ENCODE measurements at regions of chr3 and their contacts with region 1.

Region 1: DNA sequence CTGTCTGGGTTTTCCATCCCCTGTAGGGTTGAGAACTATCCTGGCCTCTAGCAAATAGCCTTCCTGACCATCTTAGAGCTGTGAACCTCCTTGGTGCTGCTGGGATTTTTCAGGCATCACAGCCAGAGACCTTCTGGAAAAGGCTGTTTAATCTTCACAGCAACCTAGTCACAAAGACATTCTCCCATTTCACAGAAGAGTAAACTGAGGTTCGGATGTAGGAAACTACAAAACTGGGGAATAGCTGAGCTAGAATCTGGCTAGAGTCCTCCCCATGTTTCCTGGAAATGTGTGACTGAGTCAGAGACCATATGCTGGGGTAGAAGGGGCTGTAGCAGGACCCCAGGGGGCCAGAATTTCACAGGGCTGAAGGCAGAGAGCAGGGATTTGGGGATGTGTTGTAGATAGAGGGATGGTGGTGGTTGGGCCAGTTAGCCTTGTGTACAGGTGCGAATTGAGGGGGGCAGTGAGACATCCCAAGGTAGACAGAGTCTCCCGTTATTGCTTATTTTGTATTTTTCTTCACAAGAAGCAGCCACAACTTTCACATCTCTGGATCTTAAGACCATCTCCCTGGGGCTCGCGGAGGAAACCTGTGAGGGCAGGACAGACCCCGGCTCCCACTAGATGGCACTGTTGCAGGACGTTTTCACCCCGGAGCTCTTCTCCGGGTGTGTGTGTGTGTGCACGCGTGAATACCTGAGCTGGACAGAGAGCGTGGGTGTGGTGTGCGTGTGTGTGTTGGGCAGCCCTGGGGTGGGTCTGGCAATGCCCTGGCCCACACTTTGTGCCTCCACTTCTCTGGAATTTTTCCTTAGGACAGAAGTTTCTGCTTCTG is 66.9 kb upstream of the PRR23C start:
- DNase-seq: peak; percentile 12
- ATAC-seq: peak; percentile 84
- H3K4me3 ChIP-seq: no peak overlapping the region
- H3K27ac ChIP-seq: no peak overlapping the region
- H3K4me1 ChIP-seq: peaks cover 5% of the 10 kb centered on the region
- H3K27me3 ChIP-seq: peaks cover 0 to 24% of the 10 kb centered on the region in 2 experiments; a peak in 3 of 5 replicates
- CTCF ChIP-seq: peak; percentile 83
- EP300 ChIP-seq: no peak
- POLR2A ChIP-seq: no peak
- RAD21 ChIP-seq: peak; percentile 57

Region 2: DNA sequence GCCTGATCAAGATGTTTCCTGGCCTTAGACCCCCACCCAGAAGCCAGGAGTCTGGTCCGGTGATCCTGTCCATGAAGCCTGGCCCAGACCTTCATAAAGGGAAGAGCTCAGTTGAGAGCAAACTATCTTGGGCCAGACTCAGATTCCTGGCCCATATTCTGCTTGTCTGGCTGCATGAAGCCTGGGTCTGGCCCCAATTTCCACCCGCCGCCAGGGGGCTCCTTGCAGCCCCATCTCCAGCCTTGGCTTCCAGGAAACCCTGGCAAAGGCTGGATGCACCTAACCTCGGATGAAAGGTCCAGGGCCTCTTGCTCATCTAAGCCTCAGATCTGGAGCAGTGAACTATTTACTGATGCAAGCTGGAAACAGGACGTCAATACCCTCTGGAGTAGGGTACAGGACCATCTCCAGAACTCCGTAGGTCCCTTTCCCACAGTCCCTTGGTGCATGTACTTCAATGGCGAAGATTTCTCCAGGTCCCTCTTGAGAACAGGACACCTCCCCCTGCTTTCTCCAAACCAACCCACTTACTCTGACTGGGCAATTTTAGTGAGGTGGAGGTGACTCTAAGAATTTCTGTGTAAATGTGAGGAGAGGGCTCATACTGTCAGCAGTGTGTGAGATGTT is 170.2 kb before region 1 on chr3:
- CTCF ChIA-PET with region 1: no interaction called
- POLR2A ChIA-PET with region 1: no interaction called
- in situ Hi-C with region 1: no loop called
- intact Hi-C with region 1: loop called (anchors 5 kb)
- DNase-seq: peak; percentile 44
- ATAC-seq: peak; percentile 73
- H3K4me3 ChIP-seq: no peak overlapping the region
- H3K27ac ChIP-seq: no peak overlapping the region
- H3K4me1 ChIP-seq: peaks cover 27% of the 10 kb centered on the region
- H3K27me3 ChIP-seq: peaks cover 21 to 90% of the 10 kb centered on the region in 2 experiments
- CTCF ChIP-seq: peak; percentile 79
- EP300 ChIP-seq: no peak
- POLR2A ChIP-seq: no peak
- RAD21 ChIP-seq: peak; percentile 69

Region 3: GRCh38 chr3:139202226-139202958 is 90.8 kb after region 1 on chr3:
- CTCF ChIA-PET with region 1: interaction called, 6 read pairs
- POLR2A ChIA-PET with region 1: no interaction called
- in situ Hi-C with region 1: loop called (anchors 5 kb)
- intact Hi-C with region 1: loop called (anchors 2 kb)
- DNase-seq: peak; percentile 46
- ATAC-seq: peak; percentile 99
- H3K4me3 ChIP-seq: no peak overlapping the region; a peak in 1 of 6 replicates
- H3K27ac ChIP-seq: no peak overlapping the region
- H3K4me1 ChIP-seq: no peaks in the 10 kb centered on the region
- H3K27me3 ChIP-seq: no peaks in the 10 kb centered on the region
- CTCF ChIP-seq: peak; percentile 77
- EP300 ChIP-seq: no peak
- POLR2A ChIP-seq: no peak
- RAD21 ChIP-seq: no peak; the same call in 1 of the 2 replicates

Measured in HepG2 (cell line).